A549 (cell line): ENCODE measurements at regions of chr7 and their contacts with region 1.

Region 1: GRCh38 chr7:76291343-76292212 is 10.9 kb upstream of the HSPB1 start:
- DNase-seq: peak; percentile 91 to 96
- ATAC-seq: peak; percentile 78 to 84
- H3K4me3 ChIP-seq: peak overlapping the region; percentile 37
- H3K27ac ChIP-seq: peak overlapping the region; percentile 92 to 97
- H3K4me1 ChIP-seq: peaks cover 49% of the 10 kb centered on the region
- CTCF ChIP-seq: peak; percentile 96
- EP300 ChIP-seq: no peak
- POLR2A ChIP-seq: peak; percentile 48
- RAD21 ChIP-seq: peak; percentile 96 to 98

Region 2: DNA sequence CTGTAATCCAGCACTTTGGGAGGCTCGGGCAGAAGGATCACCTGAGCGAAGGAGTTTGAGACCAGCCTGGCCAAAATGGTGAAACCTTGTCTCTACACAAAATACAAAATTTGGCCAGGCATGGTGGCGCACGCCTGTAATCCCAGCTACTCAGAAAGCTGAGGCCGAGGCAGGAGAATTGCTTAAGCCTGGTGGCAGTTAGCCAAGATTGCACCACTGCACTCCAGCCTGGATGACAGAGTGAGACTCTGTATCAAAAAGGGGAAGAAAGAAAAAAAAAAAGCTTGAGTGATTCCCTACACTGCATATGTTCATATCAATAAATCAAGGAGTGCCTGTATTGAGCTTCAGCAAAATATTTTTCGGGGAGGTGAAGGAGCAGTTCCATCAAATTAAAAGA is 135.6 kb before region 1 on chr7:
- CTCF ChIA-PET with region 1: no interaction called
- POLR2A ChIA-PET with region 1: no interaction called
- DNase-seq: peak in 1 of 2 experiments; percentile 31
- ATAC-seq: peak in 1 of 2 experiments; percentile 40; a peak in 2 of 6 replicates
- H3K4me3 ChIP-seq: no peak overlapping the region
- H3K27ac ChIP-seq: no peak overlapping the region
- H3K4me1 ChIP-seq: 0 out of 3 replicates have a peak, but pooled peaks cover 2% of the 10 kb centered on the region
- CTCF ChIP-seq: no peak
- EP300 ChIP-seq: no peak
- POLR2A ChIP-seq: no peak
- RAD21 ChIP-seq: no peak

Region 3: GRCh38 chr7:76231583-76231982 is 60.0 kb before region 1 on chr7:
- CTCF ChIA-PET with region 1: no interaction called
- POLR2A ChIA-PET with region 1: no interaction called
- DNase-seq: no peak
- ATAC-seq: no peak
- H3K4me3 ChIP-seq: no peak overlapping the region
- H3K27ac ChIP-seq: no peak overlapping the region
- H3K4me1 ChIP-seq: peaks cover 11% of the 10 kb centered on the region; the same call in 1 of the 3 replicates
- CTCF ChIP-seq: no peak
- EP300 ChIP-seq: no peak
- POLR2A ChIP-seq: no peak
- RAD21 ChIP-seq: no peak

Region 4: DNA sequence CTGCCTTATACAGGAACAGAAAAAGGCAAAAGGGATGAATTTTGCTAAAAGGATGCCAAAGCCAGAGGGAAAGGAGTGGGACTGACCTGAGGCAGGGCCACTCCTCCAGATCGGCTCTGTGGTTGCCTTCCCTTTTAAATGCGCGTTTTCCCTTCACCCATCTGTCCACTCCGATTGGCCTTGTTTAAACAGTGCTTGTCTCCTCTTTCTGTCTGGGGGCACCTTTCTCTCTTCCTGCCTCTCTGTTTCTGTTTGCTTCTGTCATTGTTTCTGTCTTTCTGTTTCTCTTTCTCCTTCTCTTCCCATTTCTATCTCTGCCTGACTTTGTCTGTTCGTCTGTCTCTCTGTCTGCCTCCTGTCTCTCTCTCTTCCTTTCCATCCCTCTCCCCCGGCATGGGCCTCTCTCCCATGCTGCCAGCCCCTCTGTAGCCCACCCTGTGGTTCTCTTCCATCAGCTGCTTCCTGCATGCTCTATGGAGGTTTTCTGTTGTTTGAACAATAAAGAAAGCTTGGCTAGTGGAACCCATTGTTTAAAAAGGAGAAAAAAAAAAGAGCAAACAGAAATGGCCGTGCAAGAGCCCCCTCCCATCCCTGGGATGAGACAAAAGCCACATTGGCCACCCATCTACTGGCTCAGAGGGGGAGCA is 18.6 kb before region 1 on chr7:
- CTCF ChIA-PET with region 1: interaction called, 23 read pairs
- POLR2A ChIA-PET with region 1: no interaction called
- DNase-seq: no peak
- ATAC-seq: peak in 1 of 2 experiments; percentile 21; a peak in 1 of 6 replicates
- H3K4me3 ChIP-seq: no peak overlapping the region
- H3K27ac ChIP-seq: peak overlapping the region in 1 of 2 experiments; percentile 18; a peak in 1 of 6 replicates
- H3K4me1 ChIP-seq: peaks cover 7% of the 10 kb centered on the region; the same call in 2 of the 3 replicates
- CTCF ChIP-seq: no peak
- EP300 ChIP-seq: no peak
- POLR2A ChIP-seq: no peak
- RAD21 ChIP-seq: no peak

Region 5: DNA sequence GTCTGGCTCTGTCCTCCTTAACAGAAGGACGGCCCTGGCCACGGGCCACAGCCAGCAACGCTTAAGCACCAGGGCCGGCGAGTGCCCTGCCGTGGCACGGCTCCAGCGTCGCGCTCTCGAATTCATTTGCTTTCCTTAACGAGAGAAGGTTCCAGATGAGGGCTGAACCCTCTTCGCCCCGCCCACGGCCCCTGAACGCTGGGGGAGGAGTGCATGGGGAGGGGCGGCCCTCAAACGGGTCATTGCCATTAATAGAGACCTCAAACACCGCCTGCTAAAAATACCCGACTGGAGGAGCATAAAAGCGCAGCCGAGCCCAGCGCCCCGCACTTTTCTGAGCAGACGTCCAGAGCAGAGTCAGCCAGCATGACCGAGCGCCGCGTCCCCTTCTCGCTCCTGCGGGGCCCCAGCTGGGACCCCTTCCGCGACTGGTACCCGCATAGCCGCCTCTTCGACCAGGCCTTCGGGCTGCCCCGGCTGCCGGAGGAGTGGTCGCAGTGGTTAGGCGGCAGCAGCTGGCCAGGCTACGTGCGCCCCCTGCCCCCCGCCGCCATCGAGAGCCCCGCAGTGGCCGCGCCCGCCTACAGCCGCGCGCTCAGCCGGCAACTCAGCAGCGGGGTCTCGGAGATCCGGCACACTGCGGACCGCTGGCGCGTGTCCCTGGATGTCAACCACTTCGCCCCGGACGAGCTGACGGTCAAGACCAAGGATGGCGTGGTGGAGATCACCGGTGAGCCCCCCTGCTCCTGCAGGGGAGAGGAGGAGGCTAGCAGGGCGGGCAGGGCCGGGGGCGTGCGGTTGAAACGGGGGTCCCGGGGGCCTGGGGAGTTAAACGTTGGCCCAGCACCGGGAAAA is 11.0 kb after region 1 on chr7 and contains the start of gene HSPB1:
- CTCF ChIA-PET with region 1: interaction called, 764 read pairs
- POLR2A ChIA-PET with region 1: interaction called, 20 read pairs
- DNase-seq: peak; percentile 73 to 92
- ATAC-seq: peak; percentile 52 to 60
- H3K4me3 ChIP-seq: peak within 1 kb of the TSS; percentile 91
- H3K27ac ChIP-seq: peak within 1 kb of the TSS; percentile 96
- H3K4me1 ChIP-seq: peaks cover 60% of the 10 kb centered on the region
- CTCF ChIP-seq: no peak
- EP300 ChIP-seq: no peak
- POLR2A ChIP-seq: peak; percentile 97
- RAD21 ChIP-seq: no peak
- polyA plus RNA-seq, gene HSPB1: 185 and 209 TPM in 2 replicates